ENCODE measurements at regions of chr18 and their contacts with region 1.

Region 1: GRCh38 chr18:26480897-26481895 is 67.2 kb downstream of the KCTD1 start:
- DNase-seq: peak; percentile 87
- H3K4me3 ChIP-seq: peak overlapping the region in 2 of 3 experiments; percentile 4 to 25
- H3K27ac ChIP-seq: peak overlapping the region; percentile 97
- H3K4me1 ChIP-seq: peaks cover 83% of the 10 kb centered on the region
- H3K27me3 ChIP-seq: no peaks in the 10 kb centered on the region
- CTCF ChIP-seq: no peak

Region 2: DNA sequence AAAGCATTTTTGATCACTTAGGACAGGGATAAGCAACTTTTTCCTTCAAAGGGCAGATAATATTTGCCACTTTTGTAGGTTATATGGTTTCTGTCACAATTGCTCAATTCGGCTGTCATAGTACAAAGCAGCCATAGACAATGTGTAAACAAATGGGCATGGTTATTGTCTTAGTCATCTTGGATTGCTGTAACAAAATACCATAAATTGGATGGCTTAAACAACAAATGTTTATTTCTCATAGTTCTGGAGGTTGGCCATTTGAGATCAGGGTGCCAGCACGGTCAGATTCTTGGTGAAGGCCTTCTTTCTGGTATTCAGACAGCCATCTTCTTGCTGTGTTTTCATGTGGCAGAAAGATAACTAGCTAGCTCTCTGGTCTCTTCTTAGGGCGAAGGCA is 163.8 kb before region 1 on chr18:
- CTCF ChIA-PET with region 1: no interaction called
- dilution Hi-C with region 1: no loop called
- in situ Hi-C with region 1: no loop called
- intact Hi-C with region 1: no loop called
- DNase-seq: no peak
- H3K4me3 ChIP-seq: no peak overlapping the region
- H3K27ac ChIP-seq: no peak overlapping the region
- H3K4me1 ChIP-seq: no peaks in the 10 kb centered on the region
- H3K27me3 ChIP-seq: no peaks in the 10 kb centered on the region
- CTCF ChIP-seq: no peak

Region 3: GRCh38 chr18:26460449-26461091 is 20.6 kb before region 1 on chr18:
- CTCF ChIA-PET with region 1: interaction called, 3 read pairs
- dilution Hi-C with region 1: no loop called
- in situ Hi-C with region 1: no loop called
- intact Hi-C with region 1: loop called (anchors 2 kb)
- DNase-seq: peak; percentile 92
- H3K4me3 ChIP-seq: no peak overlapping the region
- H3K27ac ChIP-seq: peak overlapping the region; percentile 89
- H3K4me1 ChIP-seq: peaks cover 36% of the 10 kb centered on the region
- H3K27me3 ChIP-seq: no peaks in the 10 kb centered on the region
- CTCF ChIP-seq: no peak

Region 4: GRCh38 chr18:26540043-26540628 is 58.9 kb after region 1 on chr18:
- CTCF ChIA-PET with region 1: no interaction called
- dilution Hi-C with region 1: loop called (anchors 5 kb)
- in situ Hi-C with region 1: loop called in 1 of 2 experiments (anchors 10 kb)
- intact Hi-C with region 1: no loop called
- DNase-seq: peak; percentile 90
- H3K4me3 ChIP-seq: no peak overlapping the region
- H3K27ac ChIP-seq: peak overlapping the region; percentile 29
- H3K4me1 ChIP-seq: peaks cover 63% of the 10 kb centered on the region
- H3K27me3 ChIP-seq: no peaks in the 10 kb centered on the region
- CTCF ChIP-seq: no peak

Region 5: DNA sequence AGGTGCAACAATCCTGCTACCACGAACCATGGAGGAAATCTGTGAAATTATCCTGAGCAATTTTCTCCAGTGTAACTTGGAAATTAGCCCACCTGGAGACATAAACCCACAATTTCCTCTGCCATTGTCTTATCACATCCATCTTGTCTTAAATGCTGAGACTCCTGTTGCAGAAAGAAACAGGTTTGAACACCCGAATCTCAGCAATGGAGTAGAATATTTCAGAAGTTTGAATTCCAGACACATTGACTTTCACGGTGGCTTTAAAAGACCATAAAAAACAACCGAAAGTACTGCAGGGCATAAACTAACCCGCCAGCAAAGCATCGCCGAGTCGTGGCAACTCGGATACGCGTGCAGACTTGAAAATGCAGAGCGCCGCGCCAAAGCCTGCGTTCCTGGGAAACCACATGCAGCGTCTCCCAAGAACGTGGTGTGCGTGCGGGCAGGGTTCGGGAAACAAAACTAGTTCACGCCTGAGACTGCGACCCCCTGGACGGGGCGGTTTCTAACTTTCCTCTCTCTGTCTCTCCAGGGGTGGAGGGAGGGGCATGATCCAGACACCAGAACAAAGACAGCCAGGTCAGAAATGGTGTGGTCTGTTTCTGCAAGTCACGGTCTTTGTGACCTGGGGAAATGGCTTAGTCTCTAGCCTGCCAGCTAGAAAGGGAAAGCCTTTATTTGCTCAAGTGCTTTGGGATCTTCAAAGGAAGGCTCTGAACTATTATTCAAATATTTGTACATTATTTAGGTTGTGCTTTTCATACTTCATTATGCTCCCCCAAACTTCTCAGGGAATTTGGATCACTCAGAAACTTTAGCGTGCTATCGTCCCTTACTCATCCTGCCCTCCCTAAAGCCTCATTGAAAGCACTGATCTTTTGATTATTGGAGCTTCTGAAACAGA is 94.0 kb after region 1 on chr18:
- CTCF ChIA-PET with region 1: no interaction called
- dilution Hi-C with region 1: no loop called
- in situ Hi-C with region 1: no loop called
- intact Hi-C with region 1: no loop called
- DNase-seq: peak; percentile 79
- H3K4me3 ChIP-seq: peak overlapping the region; percentile 30 to 49 (median 48)
- H3K27ac ChIP-seq: peak overlapping the region; percentile 84
- H3K4me1 ChIP-seq: peaks cover 21% of the 10 kb centered on the region
- H3K27me3 ChIP-seq: no peaks in the 10 kb centered on the region
- CTCF ChIP-seq: no peak

Measured in mammary epithelial cell (primary cell).